ENCODE measurements at regions of chr11 and their contacts with region 1.

Region 1: DNA sequence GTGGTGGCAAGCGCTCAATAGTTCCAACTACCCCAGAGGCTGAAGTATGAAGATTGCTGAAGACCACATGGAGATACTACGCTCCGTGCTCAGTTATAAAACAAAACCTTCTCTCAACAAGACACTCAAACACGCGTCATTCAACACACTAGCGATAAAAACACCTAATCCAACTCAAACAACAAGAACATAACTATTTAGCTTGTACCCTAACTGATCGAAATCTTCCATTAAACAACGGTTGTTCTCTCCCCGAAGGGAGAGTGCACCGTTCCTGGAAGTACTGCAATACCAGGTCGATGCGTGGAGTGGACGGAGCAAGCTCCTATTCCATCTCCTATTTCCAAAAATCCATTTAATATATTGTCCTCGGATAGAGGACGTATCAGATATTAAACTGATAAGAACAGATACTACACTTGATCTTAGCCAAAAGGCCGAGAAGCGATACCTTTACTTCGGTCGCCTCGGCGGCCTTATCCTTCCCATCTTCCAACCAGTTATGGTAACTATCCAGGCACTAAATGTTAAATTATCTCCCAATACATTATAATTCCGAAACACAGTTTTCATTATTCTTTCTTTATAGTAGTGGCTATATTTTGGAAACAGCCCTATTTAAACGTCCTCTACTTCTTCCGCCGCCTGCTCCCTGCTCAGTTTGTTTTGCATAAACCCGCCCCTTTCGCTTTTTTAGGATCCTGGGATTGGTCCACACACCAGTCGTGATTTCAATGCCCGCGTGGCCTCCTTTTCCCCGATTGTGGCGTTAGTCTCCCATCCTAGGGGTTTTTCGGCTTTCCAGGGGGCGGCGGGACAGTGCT is 2.2 kb upstream of the WDR74 start:
- DNase-seq: peak; percentile 87
- H3K4me3 Mint-ChIP-seq: no peak overlapping the region
- H3K27ac Mint-ChIP-seq: no peak overlapping the region
- H3K4me1 Mint-ChIP-seq: peaks cover 27% of the 10 kb centered on the region
- H3K27me3 Mint-ChIP-seq: no peaks in the 10 kb centered on the region

Region 2: GRCh38 chr11:62591448-62592145 is 250.0 kb before region 1 on chr11 and contains the start of gene TUT1:
- CTCF ChIA-PET with region 1: no interaction called
- POLR2A ChIA-PET with region 1: interaction called, 47 read pairs
- DNase-seq: peak; percentile 98
- H3K4me3 Mint-ChIP-seq: peak within 1 kb of the TSS; percentile 99
- H3K27ac Mint-ChIP-seq: peak within 1 kb of the TSS; percentile 96
- H3K4me1 Mint-ChIP-seq: peaks cover 65% of the 10 kb centered on the region
- H3K27me3 Mint-ChIP-seq: no peaks in the 10 kb centered on the region
- total RNA-seq, gene TUT1: 23.7 to 25.2 TPM

Region 3: GRCh38 chr11:62665075-62665598 is 176.4 kb before region 1 on chr11 and contains the starts of genes C11orf98 and CSKMT:
- CTCF ChIA-PET with region 1: no interaction called
- POLR2A ChIA-PET with region 1: interaction called, 48 read pairs
- DNase-seq: peak; percentile 96
- H3K4me3 Mint-ChIP-seq: peak within 1 kb of the TSS; percentile 93
- H3K27ac Mint-ChIP-seq: peak within 1 kb of the TSS; percentile 88
- H3K4me1 Mint-ChIP-seq: peaks cover 52% of the 10 kb centered on the region
- H3K27me3 Mint-ChIP-seq: no peaks in the 10 kb centered on the region
- total RNA-seq, gene C11orf98: 88.4 to 93.5 TPM
- total RNA-seq, gene CSKMT: 16.6 to 18.3 TPM

Region 4: DNA sequence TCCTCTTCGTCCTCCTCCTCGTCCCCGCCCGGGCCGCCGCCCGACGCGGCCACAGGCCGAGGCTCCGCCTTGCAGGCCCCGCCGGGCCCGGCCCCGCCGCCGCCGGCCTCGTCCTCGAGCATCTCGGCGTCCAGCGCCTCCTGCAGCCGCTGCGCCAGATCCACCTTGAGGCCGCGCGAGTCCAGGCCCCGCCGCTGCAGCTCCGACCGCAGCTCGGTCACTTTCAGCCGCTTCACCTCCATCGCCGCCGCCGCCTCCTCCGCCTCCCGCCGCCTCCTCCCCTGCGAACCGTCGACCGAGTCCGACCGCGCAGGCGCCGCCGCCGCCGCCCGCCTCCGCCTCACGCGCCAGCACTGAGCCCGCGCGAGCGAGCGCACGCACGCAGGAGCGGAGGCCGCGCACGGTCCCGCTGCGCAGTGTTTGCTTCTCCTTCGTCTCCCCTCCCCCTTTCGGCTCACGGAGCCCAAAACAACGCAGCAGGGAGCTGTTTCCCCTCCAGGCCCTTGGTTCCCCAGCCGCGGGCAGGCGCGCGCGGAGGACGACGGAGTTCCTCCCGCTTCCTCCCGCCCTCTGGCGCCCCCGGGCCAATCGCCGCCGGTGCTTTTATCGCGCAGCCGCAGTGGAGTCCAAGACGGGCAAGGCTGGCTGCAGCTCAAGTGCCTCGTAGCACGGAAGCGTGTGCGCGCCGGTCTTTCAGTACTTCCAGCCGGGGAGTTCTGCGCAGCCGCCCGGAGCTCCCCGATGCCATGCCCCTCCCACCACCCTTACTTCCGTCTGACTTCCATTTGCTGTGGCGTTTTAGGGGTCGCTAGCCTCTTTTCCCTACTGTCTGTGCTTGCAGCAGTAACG is 114.4 kb before region 1 on chr11 and contains the start of gene HNRNPUL2:
- CTCF ChIA-PET with region 1: interaction called, 5 read pairs
- POLR2A ChIA-PET with region 1: interaction called, 130 read pairs
- DNase-seq: peak; percentile 99
- H3K4me3 Mint-ChIP-seq: peak within 1 kb of the TSS; percentile 87
- H3K27ac Mint-ChIP-seq: peak within 1 kb of the TSS; percentile 97
- H3K4me1 Mint-ChIP-seq: peaks cover 50% of the 10 kb centered on the region
- H3K27me3 Mint-ChIP-seq: no peaks in the 10 kb centered on the region
- total RNA-seq, gene HNRNPUL2: 65.1 to 65.3 TPM

Region 5: DNA sequence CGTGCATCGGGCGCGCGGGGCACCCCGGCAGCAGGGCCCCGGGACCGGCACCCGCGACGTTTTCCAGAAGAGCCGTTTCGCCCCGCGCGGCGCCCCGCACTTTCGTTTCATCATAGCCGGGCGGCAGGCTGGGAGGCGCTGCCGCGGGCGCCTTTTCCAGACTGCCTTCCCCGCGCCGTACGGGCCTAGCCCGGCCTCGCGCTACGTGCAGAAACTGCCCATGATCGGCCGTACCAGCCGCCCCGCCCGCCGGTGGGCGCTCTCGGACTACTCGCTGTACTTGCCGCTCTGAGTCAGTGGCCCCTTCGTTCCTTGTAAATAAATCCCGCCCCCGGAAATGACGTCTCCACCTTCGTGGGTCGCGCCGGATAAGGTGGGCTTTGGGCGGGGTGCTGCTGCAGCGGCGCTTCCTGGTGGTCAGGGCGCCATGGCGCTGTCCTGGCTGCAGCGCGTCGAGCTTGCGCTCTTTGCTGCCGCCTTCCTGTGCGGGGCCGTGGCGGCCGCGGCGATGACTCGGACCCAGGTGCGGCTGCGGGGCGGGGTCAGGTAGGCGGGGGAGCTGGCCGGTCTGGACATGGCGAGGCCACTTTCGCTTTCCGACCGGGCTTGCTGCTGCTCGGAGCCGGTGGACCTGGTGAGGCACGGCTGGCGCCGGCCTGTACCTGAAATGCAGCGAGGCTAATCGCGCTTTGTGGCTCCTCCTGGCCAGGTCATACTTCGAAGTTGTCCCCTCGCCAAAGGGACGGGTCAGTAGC is 54.4 kb before region 1 on chr11 and contains the start of gene TMEM179B:
- CTCF ChIA-PET with region 1: interaction called, 29 read pairs
- POLR2A ChIA-PET with region 1: interaction called, 224 read pairs
- DNase-seq: peak; percentile 98
- H3K4me3 Mint-ChIP-seq: peak within 1 kb of the TSS; percentile 95
- H3K27ac Mint-ChIP-seq: peak within 1 kb of the TSS; percentile 97
- H3K4me1 Mint-ChIP-seq: peaks cover 47% of the 10 kb centered on the region
- H3K27me3 Mint-ChIP-seq: no peaks in the 10 kb centered on the region
- total RNA-seq, gene TMEM179B: 46.9 to 48.2 TPM

Region 6: DNA sequence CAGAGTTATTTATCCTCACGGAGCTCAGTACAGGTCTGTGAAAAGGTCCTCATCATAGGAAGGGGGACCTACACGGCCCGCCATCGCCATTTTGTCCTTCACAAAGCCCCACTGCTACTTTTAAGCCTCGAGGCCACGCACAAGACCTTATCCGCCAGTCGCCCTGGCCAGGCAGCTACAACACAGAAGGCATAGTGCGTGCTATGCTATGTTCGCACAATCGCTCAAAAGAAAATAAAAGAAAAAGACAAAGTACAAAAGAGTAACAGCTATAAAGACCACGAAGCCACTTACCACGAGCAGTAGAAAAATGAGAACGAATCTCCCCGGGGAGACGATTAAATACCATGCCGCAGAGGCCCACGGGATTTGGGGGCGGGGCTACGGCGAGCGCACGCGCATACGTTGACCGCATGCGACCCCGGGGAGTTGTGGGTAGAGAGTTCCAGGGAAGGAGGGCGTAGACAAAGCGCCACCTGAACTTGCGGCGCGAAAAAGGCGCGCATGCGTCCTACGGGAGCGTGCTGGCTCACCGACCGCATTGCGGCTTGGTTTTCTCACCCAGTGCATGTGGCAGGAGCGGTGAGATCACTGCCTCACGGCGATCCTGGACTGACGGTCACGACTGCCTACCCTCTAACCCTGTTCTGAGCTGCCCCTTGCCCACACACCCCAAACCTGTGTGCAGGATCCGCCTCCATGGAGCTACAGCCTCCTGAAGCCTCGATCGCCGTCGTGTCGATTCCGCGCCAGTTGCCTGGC is 14.2 kb after region 1 on chr11:
- CTCF ChIA-PET with region 1: interaction called, 20 read pairs
- POLR2A ChIA-PET with region 1: interaction called, 674 read pairs
- DNase-seq: peak; percentile 99
- H3K4me3 Mint-ChIP-seq: peak overlapping the region; percentile 97
- H3K27ac Mint-ChIP-seq: peak overlapping the region; percentile 96
- H3K4me1 Mint-ChIP-seq: peaks cover 75% of the 10 kb centered on the region
- H3K27me3 Mint-ChIP-seq: no peaks in the 10 kb centered on the region

Region 7: GRCh38 chr11:62905927-62906531 is 64.5 kb after region 1 on chr11:
- CTCF ChIA-PET with region 1: no interaction called
- POLR2A ChIA-PET with region 1: no interaction called
- DNase-seq: peak; percentile 82
- H3K4me3 Mint-ChIP-seq: no peak overlapping the region
- H3K27ac Mint-ChIP-seq: no peak overlapping the region
- H3K4me1 Mint-ChIP-seq: peaks cover 26% of the 10 kb centered on the region
- H3K27me3 Mint-ChIP-seq: peaks cover 29% of the 10 kb centered on the region